Activated CD8-positive, alpha-beta T cell treated with anti-CD3 and anti-CD28 coated beads for 36 hours (primary cell): ENCODE measurements at regions of chr13 and their contacts with region 1.

Region 1: GRCh38 chr13:97249093-97249795 is 27.1 kb downstream of the MBNL2 start:
- DNase-seq: no peak
- ATAC-seq: no peak
- H3K4me3 Mint-ChIP-seq: no peak overlapping the region
- H3K27ac Mint-ChIP-seq: no peak overlapping the region
- H3K4me1 Mint-ChIP-seq: peaks cover 20% of the 10 kb centered on the region
- H3K27me3 Mint-ChIP-seq: no peaks in the 10 kb centered on the region
- CTCF ChIP-seq: no peak

Region 2: GRCh38 chr13:97165502-97166425 is 83.5 kb before region 1 on chr13:
- CTCF ChIA-PET with region 1: no interaction called
- POLR2A ChIA-PET with region 1: no interaction called
- intact Hi-C with region 1: no loop called
- DNase-seq: no peak
- ATAC-seq: no peak
- H3K4me3 Mint-ChIP-seq: no peak overlapping the region
- H3K27ac Mint-ChIP-seq: no peak overlapping the region
- H3K4me1 Mint-ChIP-seq: no peaks in the 10 kb centered on the region
- H3K27me3 Mint-ChIP-seq: peaks cover 2% of the 10 kb centered on the region
- CTCF ChIP-seq: no peak

Region 3: GRCh38 chr13:97231118-97231828 is 18.0 kb before region 1 on chr13:
- CTCF ChIA-PET with region 1: interaction called, 11 read pairs
- POLR2A ChIA-PET with region 1: no interaction called
- intact Hi-C with region 1: no loop called
- DNase-seq: no peak
- ATAC-seq: no peak
- H3K4me3 Mint-ChIP-seq: no peak overlapping the region
- H3K27ac Mint-ChIP-seq: no peak overlapping the region
- H3K4me1 Mint-ChIP-seq: peaks cover 42% of the 10 kb centered on the region
- H3K27me3 Mint-ChIP-seq: no peaks in the 10 kb centered on the region
- CTCF ChIP-seq: no peak